PC-9 (cell line): ENCODE measurements at regions of chr7 and their contacts with region 1.

Region 1: DNA sequence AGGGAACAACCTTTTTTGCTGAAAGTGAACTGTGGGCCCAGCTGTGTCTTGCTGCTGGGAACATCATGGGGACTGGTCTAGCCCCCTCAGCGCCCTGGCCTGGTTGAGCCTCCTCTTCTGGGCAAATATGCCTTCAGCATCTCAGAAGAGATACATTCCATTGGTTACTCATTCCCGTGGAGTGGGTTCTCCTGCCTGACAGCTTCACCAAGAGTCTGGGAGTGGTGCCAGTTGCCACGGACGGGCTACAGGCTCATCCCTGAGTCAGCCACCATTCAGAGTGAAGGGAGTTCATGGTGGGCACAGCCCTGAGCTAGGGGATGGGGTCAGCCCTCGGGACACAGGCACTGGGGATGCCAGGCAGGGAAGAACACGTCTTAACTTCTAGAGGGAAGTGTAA is 81.9 kb downstream of the RAMP3 start:
- DNase-seq: peak in 1 of 2 experiments; percentile 33
- H3K4me3 ChIP-seq: no peak overlapping the region
- H3K27ac ChIP-seq: no peak overlapping the region
- H3K4me1 ChIP-seq: no peaks in the 10 kb centered on the region
- H3K27me3 ChIP-seq: peaks cover 92% of the 10 kb centered on the region
- CTCF ChIP-seq: no peak

Region 2: GRCh38 chr7:45178241-45179225 is 61.0 kb before region 1 on chr7:
- CTCF ChIA-PET with region 1: no interaction called
- POLR2A ChIA-PET with region 1: no interaction called
- intact Hi-C with region 1: no loop called
- DNase-seq: peak in 1 of 2 experiments; percentile 23
- H3K4me3 ChIP-seq: no peak overlapping the region
- H3K27ac ChIP-seq: no peak overlapping the region
- H3K4me1 ChIP-seq: no peaks in the 10 kb centered on the region
- H3K27me3 ChIP-seq: peaks cover 99% of the 10 kb centered on the region
- CTCF ChIP-seq: peak; percentile 44

Region 3: GRCh38 chr7:45389073-45389872 is 149.8 kb after region 1 on chr7:
- CTCF ChIA-PET with region 1: no interaction called
- POLR2A ChIA-PET with region 1: no interaction called
- intact Hi-C with region 1: no loop called
- DNase-seq: no peak
- H3K4me3 ChIP-seq: no peak overlapping the region
- H3K27ac ChIP-seq: no peak overlapping the region
- H3K4me1 ChIP-seq: no peaks in the 10 kb centered on the region
- H3K27me3 ChIP-seq: peaks cover 40% of the 10 kb centered on the region
- CTCF ChIP-seq: no peak

Region 4: DNA sequence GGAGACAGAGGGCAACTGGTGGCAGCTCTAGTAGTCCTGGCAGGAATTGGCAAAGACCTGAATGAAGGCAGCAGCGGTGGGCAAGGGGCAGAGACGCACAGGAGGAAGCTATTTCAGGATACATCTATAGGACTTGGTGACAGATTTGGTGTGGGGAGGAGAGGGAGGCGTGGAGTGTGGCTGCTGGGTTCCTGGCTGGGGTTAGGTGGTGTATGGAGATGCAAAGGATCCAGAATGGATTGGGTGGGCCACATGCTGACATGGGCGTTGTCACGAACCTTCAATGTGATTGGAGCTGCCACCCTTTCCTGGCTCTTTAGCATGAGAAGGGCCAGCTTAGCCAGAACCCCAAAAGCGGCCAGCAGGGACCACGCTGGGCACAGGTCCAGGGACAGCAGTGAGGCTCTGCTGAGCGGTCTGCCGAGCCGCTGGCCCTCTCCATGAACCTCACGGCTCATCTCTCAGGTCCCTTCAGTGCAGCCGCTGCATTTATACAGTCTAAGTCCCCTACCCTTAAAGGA is 324.5 kb after region 1 on chr7:
- CTCF ChIA-PET with region 1: no interaction called
- POLR2A ChIA-PET with region 1: no interaction called
- intact Hi-C with region 1: no loop called
- DNase-seq: no peak
- H3K4me3 ChIP-seq: no peak overlapping the region
- H3K27ac ChIP-seq: no peak overlapping the region
- H3K4me1 ChIP-seq: no peaks in the 10 kb centered on the region
- H3K27me3 ChIP-seq: peaks cover 92% of the 10 kb centered on the region
- CTCF ChIP-seq: no peak

Region 5: GRCh38 chr7:45580053-45580872 is 340.8 kb after region 1 on chr7:
- CTCF ChIA-PET with region 1: interaction called, 10 read pairs
- POLR2A ChIA-PET with region 1: no interaction called
- intact Hi-C with region 1: no loop called
- DNase-seq: no peak
- H3K4me3 ChIP-seq: no peak overlapping the region
- H3K27ac ChIP-seq: no peak overlapping the region
- H3K4me1 ChIP-seq: no peaks in the 10 kb centered on the region
- H3K27me3 ChIP-seq: peaks cover 93% of the 10 kb centered on the region
- CTCF ChIP-seq: peak; percentile 50